ENCODE measurements at regions of chr2 and their contacts with region 1.

Region 1: GRCh38 chr2:11697103-11697871 is 27.3 kb upstream of the NTSR2 start:
- DNase-seq: no peak
- H3K4me3 ChIP-seq: no peak overlapping the region
- H3K27ac ChIP-seq: peak overlapping the region; percentile 59 to 67
- H3K4me1 ChIP-seq: no peaks in the 10 kb centered on the region
- H3K27me3 ChIP-seq: no peaks in the 10 kb centered on the region
- CTCF ChIP-seq: no peak
- POLR2A ChIP-seq: no peak

Region 2: GRCh38 chr2:11746376-11746806 is 49.1 kb after region 1 on chr2 and contains the start of gene LPIN1:
- intact Hi-C with region 1: loop called (anchors 5 kb)
- DNase-seq: peak; percentile 86
- H3K4me3 ChIP-seq: peak within 1 kb of the TSS; percentile 67 to 68
- H3K27ac ChIP-seq: peak within 1 kb of the TSS; percentile 77 to 82
- H3K4me1 ChIP-seq: no peaks in the 10 kb centered on the region
- H3K27me3 ChIP-seq: no peaks in the 10 kb centered on the region
- CTCF ChIP-seq: peak in 1 of 4 experiments; percentile 20
- POLR2A ChIP-seq: peak; percentile 81
- total RNA-seq, gene LPIN1: 18.2 to 57.1 TPM